ENCODE measurements at regions of chr18 and their contacts with region 1.

Region 1: GRCh38 chr18:54946149-54946581 is 13.1 kb downstream of the CCDC68 start:
- DNase-seq: no peak

Region 2: GRCh38 chr18:53644799-53645471 is 1301.2 kb before region 1 on chr18:
- intact Hi-C with region 1: loop called in 1 of 2 experiments (anchors 5 kb)
- DNase-seq: no peak

Region 3: DNA sequence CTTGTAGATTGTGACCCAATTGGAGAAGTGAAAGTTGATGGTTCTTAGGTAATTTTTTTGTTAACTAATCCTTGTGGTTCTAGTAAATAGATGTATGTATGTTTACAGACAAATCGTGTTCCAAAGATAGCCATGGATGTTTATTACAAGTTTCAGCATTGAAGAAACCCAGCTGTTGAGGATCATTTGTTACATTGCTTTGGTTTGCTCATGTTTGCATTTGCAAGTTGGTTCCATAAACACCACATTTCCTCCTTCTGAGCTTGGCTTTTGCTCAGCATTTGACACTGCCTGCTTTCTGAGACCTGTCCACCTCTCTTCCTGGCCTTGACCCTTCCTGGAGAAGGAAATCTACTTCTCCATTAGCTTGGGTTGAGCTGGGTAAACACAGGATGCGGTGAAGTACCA is 14.9 kb after region 1 on chr18:
- intact Hi-C with region 1: loop called in 1 of 2 experiments (anchors 2 kb)
- DNase-seq: no peak

Region 4: DNA sequence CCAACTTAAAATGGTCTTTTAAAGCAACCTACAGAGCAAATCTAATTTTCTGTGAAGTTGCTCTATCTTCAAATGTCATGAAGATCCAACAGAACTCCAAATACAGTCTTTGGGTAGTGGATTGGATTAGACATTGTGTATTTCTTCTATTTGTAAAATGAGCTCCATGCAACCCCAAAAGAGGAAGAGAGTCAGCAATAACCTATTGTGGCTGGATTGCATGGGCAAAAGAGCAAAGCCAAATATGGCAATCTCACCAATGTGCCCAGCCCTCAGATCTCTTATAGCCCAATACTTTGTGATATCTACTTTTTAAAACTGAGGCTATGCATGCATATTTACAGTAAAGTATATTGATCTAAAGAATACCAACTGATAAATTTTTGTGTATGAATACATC is 1546.0 kb after region 1 on chr18:
- intact Hi-C with region 1: no loop called
- DNase-seq: no peak